Left ventricle myocardium inferior (tissue), 1 donor: ENCODE measurements at regions of chrX and their contacts with region 1.

Region 1: DNA sequence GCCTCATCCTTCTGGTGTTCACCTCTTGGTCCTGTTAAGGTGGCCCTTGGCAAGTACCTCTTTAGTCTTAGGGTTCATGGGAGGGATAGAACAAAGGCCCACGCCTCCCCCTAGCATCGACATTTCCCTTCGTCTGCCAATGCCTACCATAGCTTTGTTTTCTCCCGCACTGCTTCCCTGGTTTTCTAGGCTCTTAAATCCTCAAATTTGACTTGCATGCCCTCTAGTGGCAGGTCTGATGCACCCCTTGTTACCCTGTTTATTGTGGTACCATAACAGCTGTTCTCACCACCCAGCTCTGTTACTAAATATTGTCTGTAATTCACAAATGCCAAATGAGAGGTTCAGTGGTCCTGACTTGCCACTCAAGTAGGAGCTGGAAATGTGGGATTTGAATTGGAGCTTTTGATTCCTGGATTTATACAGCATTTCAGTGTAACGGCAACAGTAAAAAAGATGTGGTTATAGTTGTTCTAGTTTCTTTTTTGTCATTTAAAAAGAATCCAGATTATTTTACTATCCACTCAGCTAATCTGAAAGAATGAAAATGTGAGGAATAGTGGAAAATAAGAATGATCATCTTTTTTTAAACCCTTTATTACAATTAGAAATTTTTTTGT is 100.1 kb downstream of the REPS2 start:
- DNase-seq: peak; percentile 24
- H3K4me3 ChIP-seq: no peak overlapping the region
- H3K27ac ChIP-seq: no peak overlapping the region
- H3K4me1 ChIP-seq: no peaks in the 10 kb centered on the region
- H3K27me3 ChIP-seq: no peaks in the 10 kb centered on the region
- CTCF ChIP-seq: peak; percentile 70

Region 2: DNA sequence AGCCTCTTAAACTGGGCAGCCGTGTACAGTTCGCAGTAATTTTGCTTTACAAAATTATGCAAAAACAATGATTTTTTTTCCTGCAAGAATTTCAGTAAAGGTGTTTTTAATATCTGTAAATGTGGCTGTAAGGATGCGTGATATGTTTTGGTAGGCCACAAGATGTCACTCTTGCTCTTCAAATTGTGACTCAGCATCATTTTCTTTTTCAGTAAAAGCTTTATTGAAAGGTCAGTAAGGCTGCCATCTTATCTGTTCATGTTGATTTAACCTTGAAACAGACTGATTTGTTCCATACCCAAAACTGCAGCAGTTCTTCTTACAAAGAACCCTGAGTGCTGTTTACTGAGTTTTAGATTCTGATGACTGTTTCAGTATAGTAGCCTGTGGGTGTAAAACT is 220.4 kb before region 1 on chrX:
- intact Hi-C with region 1: loop called (anchors 10 kb)
- DNase-seq: no peak
- H3K4me3 ChIP-seq: no peak overlapping the region
- H3K27ac ChIP-seq: no peak overlapping the region
- H3K4me1 ChIP-seq: peaks cover 12% of the 10 kb centered on the region
- H3K27me3 ChIP-seq: no peaks in the 10 kb centered on the region
- CTCF ChIP-seq: peak; percentile 55

Region 3: GRCh38 chrX:16882702-16883486 is 163.7 kb before region 1 on chrX:
- intact Hi-C with region 1: loop called (anchors 10 kb)
- DNase-seq: peak; percentile 50
- H3K4me3 ChIP-seq: peak overlapping the region; percentile 66
- H3K27ac ChIP-seq: peak overlapping the region; percentile 70
- H3K4me1 ChIP-seq: peaks cover 5% of the 10 kb centered on the region
- H3K27me3 ChIP-seq: no peaks in the 10 kb centered on the region
- CTCF ChIP-seq: peak; percentile 65

Region 4: DNA sequence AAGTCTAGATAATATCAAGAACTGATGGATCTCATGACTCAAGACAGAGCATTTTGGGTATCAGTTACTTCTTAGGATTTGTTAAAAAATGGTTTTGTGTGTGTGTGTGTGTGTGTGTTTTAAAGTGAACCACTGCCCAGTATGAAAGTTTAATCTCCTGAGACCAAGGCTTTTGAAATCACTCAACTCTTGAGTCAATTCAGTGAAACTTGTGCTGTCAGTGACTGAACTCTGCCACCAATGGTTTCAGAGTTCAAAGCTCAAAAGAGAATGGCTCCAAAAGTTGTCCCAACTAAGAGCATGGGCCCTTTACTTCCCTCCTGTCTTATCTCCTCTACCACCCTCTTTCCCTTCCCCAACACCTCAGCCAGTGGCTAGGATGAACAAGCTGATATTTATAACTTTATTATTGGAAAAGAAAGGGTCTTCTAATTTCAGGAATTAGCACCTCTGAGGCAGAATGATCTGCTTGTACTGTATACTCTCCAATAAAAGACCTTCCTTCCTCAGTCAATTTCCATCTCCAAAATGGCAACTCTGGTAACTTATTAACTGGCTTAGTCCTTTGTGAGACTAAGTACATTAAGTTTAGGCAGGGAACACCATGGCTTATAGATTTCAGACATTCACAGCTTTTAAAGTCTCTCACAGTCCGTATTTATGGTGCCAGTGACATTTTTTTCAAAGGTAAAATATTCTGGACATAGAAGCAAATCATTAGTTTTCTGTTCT is 52.1 kb after region 1 on chrX:
- intact Hi-C with region 1: no loop called
- DNase-seq: no peak
- H3K4me3 ChIP-seq: no peak overlapping the region
- H3K27ac ChIP-seq: no peak overlapping the region
- H3K4me1 ChIP-seq: no peaks in the 10 kb centered on the region
- H3K27me3 ChIP-seq: no peaks in the 10 kb centered on the region
- CTCF ChIP-seq: no peak

Region 5: GRCh38 chrX:17247145-17247544 is 200.6 kb after region 1 on chrX:
- intact Hi-C with region 1: no loop called
- DNase-seq: no peak
- H3K4me3 ChIP-seq: no peak overlapping the region
- H3K27ac ChIP-seq: no peak overlapping the region
- H3K4me1 ChIP-seq: no peaks in the 10 kb centered on the region
- H3K27me3 ChIP-seq: no peaks in the 10 kb centered on the region
- CTCF ChIP-seq: no peak